Activated CD4-positive, alpha-beta memory T cell treated with anti-CD3 and anti-CD28 coated beads, Interleukin-2, amount 10 ng/mL, durations not matched to agents 7 days and 5 days (primary cell): ENCODE measurements at regions of chr10 and their contacts with region 1.

Region 1: DNA sequence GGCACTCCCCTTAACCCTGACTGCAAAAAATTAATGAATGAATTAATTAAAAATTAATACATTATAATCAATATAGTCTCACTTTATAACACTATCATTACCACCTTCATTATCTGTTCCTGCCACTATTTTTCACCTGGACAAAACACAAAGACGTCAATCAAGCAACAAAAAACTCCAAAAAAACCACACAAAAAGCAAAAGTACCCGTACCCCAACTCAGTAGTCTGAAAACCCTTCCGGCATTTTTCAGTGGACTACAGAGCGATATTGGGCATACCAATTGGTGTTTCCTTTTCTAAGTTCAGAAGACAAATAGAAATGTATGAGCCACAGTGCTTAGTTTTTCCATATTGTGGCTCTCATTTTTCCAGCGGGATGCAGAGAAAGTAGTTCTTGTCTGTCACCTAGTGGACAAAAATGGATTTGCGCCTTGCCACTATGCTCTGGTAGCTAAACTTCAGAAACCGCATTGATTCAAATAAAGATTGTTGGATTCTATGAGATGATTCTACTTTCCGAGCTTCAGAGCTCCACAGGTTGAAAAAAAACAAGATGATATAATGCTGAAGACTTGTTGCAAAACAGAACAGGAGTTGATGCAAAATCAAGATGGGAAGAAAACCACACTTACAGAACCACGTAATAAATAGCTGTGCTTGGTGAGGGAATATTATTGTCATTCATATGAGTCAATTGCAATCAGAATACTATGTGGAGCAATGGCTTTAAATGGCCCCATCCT is 50.6 kb upstream of the ITGB1 start:
- DNase-seq: peak; percentile 70
- H3K4me3 Mint-ChIP-seq: peak overlapping the region; percentile 51
- H3K27ac Mint-ChIP-seq: peak overlapping the region; percentile 78
- H3K4me1 Mint-ChIP-seq: peaks cover 53% of the 10 kb centered on the region
- H3K27me3 Mint-ChIP-seq: no peaks in the 10 kb centered on the region

Region 2: DNA sequence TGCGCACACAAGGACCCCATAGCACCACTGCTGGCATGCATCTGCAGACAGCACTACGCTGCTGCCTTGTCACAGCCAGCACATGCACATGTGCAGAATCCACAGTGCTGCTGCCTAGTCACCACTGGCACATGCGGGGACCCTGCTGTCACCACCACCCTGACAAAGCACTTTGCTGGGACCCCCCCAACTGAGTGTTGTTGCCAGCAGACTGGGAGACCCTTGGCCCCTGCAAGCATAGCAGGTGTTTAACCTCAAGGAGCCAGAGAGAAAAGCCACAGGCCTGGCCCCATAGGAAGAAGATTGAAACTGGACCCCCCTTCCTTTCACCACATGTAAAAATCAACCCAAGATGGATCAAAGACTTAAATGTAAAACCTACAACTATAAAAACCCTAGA is 261.8 kb before region 1 on chr10:
- CTCF ChIA-PET with region 1: no interaction called
- POLR2A ChIA-PET with region 1: no interaction called
- DNase-seq: no peak
- H3K4me3 Mint-ChIP-seq: no peak overlapping the region
- H3K27ac Mint-ChIP-seq: no peak overlapping the region
- H3K4me1 Mint-ChIP-seq: no peaks in the 10 kb centered on the region
- H3K27me3 Mint-ChIP-seq: no peaks in the 10 kb centered on the region

Region 3: DNA sequence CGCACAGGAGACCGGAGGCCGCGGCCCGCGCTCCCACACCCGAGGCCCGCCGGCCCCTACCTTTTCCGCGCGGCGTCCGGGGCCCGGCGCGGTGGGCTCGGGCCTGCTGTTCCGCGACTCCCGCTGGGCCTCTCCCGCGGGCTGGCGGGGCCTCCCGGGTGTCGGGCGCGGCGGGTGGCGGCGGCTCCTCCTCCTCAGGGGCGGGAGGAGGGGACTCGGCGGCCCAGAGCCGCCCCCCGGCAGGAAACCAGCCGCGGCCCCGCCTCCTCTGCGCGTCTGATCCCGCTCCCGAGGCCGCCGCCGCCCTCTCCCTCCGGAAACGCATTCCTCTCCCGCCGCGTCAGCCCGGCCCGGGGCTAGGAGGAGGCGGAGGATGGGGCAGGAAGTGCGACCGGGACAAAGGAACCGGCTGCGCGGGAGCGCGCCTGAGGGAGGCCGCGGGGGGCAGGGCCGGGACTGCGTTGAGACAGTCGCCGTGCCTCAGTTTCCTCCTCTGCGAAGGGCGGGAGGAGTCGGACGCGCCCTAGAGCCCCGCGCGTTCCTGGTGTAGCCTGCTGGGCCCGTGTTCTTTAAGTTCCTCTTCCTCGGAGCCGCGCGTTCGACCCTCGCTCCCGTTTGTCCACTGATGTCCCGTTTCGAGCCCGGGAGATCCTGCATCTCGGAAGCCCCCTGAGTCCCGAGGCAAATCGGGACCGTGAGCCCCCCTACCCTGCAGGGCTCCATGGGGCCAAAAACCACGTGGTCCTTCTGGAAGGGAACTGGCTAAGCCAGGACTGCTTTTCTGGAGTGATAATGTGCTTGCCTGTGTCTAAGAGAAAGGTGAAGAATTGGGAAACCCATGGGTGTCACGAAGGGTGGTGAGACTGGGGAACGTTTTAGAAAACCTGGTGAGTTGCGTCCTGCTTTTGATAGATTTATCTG is 50.3 kb before region 1 on chr10 and contains the start of gene ITGB1:
- CTCF ChIA-PET with region 1: interaction called, 14 read pairs
- POLR2A ChIA-PET with region 1: interaction called, 20 read pairs
- DNase-seq: peak; percentile 88
- H3K4me3 Mint-ChIP-seq: peak within 1 kb of the TSS; percentile 82
- H3K27ac Mint-ChIP-seq: peak within 1 kb of the TSS; percentile 82
- H3K4me1 Mint-ChIP-seq: peaks cover 46% of the 10 kb centered on the region
- H3K27me3 Mint-ChIP-seq: no peaks in the 10 kb centered on the region
- total RNA-seq, gene ITGB1: 233 to 242 TPM

Region 4: GRCh38 chr10:32985781-32986350 is 22.8 kb before region 1 on chr10:
- CTCF ChIA-PET with region 1: interaction called, 16 read pairs
- POLR2A ChIA-PET with region 1: interaction called, 15 read pairs
- DNase-seq: no peak
- H3K4me3 Mint-ChIP-seq: no peak overlapping the region
- H3K27ac Mint-ChIP-seq: no peak overlapping the region
- H3K4me1 Mint-ChIP-seq: peaks cover 32% of the 10 kb centered on the region
- H3K27me3 Mint-ChIP-seq: no peaks in the 10 kb centered on the region

Region 5: GRCh38 chr10:33125522-33126517 is 117.1 kb after region 1 on chr10:
- CTCF ChIA-PET with region 1: interaction called, 13 read pairs
- POLR2A ChIA-PET with region 1: interaction called, 4 read pairs
- DNase-seq: peak; percentile 62
- H3K4me3 Mint-ChIP-seq: peak overlapping the region; percentile 18
- H3K27ac Mint-ChIP-seq: peak overlapping the region; percentile 94
- H3K4me1 Mint-ChIP-seq: peaks cover 87% of the 10 kb centered on the region
- H3K27me3 Mint-ChIP-seq: no peaks in the 10 kb centered on the region

Region 6: GRCh38 chr10:33155720-33156638 is 147.3 kb after region 1 on chr10:
- CTCF ChIA-PET with region 1: interaction called, 63 read pairs
- POLR2A ChIA-PET with region 1: interaction called, 14 read pairs
- DNase-seq: peak; percentile 53
- H3K4me3 Mint-ChIP-seq: no peak overlapping the region
- H3K27ac Mint-ChIP-seq: peak overlapping the region; percentile 59
- H3K4me1 Mint-ChIP-seq: peaks cover 53% of the 10 kb centered on the region
- H3K27me3 Mint-ChIP-seq: no peaks in the 10 kb centered on the region

Region 7: DNA sequence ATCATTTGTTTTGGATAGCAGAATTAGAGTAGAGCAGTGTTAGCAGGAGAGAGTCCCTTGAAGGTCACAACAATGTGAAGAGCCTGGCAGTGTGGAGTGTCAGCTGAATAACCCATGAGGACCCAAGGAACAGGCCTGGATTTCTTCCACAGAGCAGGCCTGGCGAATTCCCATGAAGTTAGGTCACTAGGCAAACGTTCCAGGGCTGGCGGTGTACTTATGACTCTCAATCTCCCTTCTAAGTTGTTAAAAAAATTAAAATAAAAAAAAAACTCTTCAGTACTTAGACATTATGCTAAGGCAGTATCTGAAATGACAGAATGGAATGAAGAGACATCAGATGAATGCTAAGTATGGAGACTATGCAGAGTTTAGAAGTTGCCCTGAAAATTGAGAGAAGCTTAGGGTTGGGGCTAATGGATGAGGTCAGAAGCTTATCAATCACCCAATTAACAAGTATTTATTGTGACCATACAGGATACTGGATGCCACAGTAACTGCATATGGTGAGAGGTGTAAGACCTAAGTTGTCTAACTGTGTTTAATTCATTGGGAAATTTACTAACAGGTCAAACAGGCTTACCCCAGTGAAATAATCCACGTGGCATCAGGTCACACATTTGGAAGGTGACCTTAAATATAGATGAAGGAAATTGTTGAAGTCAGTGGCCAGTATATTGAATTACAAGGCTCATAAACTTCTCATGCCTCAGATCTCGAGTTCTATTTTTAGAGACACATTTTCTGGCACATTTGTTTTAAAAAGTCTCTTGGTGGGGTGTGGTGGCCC is 452.0 kb after region 1 on chr10:
- CTCF ChIA-PET with region 1: no interaction called
- POLR2A ChIA-PET with region 1: no interaction called
- DNase-seq: no peak
- H3K4me3 Mint-ChIP-seq: no peak overlapping the region
- H3K27ac Mint-ChIP-seq: no peak overlapping the region
- H3K4me1 Mint-ChIP-seq: no peaks in the 10 kb centered on the region
- H3K27me3 Mint-ChIP-seq: no peaks in the 10 kb centered on the region